MCF 10A (cell line): ENCODE measurements at regions of chr3 and their contacts with region 1.

Region 1: GRCh38 chr3:135905058-135905724 is 60.3 kb upstream of the PPP2R3A start:
- DNase-seq: peak; percentile 30
- H3K4me3 Mint-ChIP-seq: no peak overlapping the region
- H3K27ac Mint-ChIP-seq: no peak overlapping the region
- H3K4me1 Mint-ChIP-seq: peaks cover 12% of the 10 kb centered on the region
- H3K27me3 Mint-ChIP-seq: peaks cover 14% of the 10 kb centered on the region
- CTCF ChIP-seq: no peak

Region 2: DNA sequence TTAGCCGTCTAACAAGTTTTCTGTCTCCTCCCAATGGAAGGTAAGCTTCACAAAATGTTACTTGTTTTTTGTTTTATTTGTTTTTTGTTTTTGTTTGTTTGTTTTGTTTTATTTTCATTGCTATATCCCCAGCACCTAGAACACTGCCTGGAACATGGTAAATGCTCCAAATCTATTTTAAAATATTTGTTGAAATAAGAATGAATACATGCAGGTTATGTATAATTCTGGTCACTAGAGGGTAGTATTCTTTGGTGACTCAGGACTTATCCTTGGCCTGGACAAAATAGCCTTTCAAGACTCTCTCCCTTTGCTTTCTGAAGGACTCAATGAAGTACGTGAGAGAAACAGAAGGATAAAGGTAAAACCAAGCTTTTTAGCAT is 13.4 kb after region 1 on chr3:
- CTCF ChIA-PET with region 1: interaction called, 76 read pairs
- POLR2A ChIA-PET with region 1: interaction called, 3 read pairs
- intact Hi-C with region 1: no loop called
- DNase-seq: peak; percentile 52
- H3K4me3 Mint-ChIP-seq: no peak overlapping the region
- H3K27ac Mint-ChIP-seq: no peak overlapping the region
- H3K4me1 Mint-ChIP-seq: peaks cover 18% of the 10 kb centered on the region
- H3K27me3 Mint-ChIP-seq: no peaks in the 10 kb centered on the region
- CTCF ChIP-seq: peak; percentile 33

Region 3: GRCh38 chr3:136008701-136009465 is 103.7 kb after region 1 on chr3:
- CTCF ChIA-PET with region 1: no interaction called
- POLR2A ChIA-PET with region 1: no interaction called
- intact Hi-C with region 1: no loop called
- DNase-seq: no peak
- H3K4me3 Mint-ChIP-seq: no peak overlapping the region
- H3K27ac Mint-ChIP-seq: no peak overlapping the region
- H3K4me1 Mint-ChIP-seq: no peaks in the 10 kb centered on the region
- H3K27me3 Mint-ChIP-seq: no peaks in the 10 kb centered on the region
- CTCF ChIP-seq: no peak

Region 4: DNA sequence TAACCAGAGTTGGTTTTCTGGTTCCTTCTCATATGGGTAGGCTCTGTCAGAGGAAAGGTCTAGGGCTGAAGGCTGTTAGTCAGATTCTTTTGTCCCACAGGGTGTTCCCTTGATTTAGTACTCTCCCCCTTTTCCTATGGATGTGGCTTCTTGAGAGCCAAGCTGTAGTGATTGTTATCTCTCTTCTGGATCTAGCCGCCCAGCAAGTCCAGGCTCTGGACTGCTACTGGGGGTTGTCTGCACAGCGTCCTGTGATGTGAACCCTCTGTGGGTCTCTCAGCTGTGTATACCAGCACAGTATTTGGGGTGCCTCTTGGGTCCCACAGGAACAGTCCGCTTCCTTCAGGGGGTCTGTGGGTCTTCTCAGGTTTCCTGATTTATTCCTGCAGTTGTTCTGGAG is 131.1 kb after region 1 on chr3:
- CTCF ChIA-PET with region 1: interaction called, 207 read pairs
- POLR2A ChIA-PET with region 1: interaction called, 15 read pairs
- intact Hi-C with region 1: no loop called
- DNase-seq: no peak
- H3K4me3 Mint-ChIP-seq: no peak overlapping the region
- H3K27ac Mint-ChIP-seq: no peak overlapping the region
- H3K4me1 Mint-ChIP-seq: no peaks in the 10 kb centered on the region
- H3K27me3 Mint-ChIP-seq: no peaks in the 10 kb centered on the region
- CTCF ChIP-seq: no peak